Natural killer cell (primary cell): ENCODE measurements at regions of chr4 and their contacts with region 1.

Region 1: GRCh38 chr4:146175541-146176453 is at the start of gene LSM6:
- DNase-seq: peak; percentile 78 to 91
- ATAC-seq: peak; percentile 91 to 95 (median 93)
- H3K4me3 ChIP-seq: peak within 1 kb of the TSS; percentile 100
- H3K4me3 Mint-ChIP-seq: peak within 1 kb of the TSS; percentile 92
- H3K27ac ChIP-seq: peak within 1 kb of the TSS; percentile 84
- H3K27ac Mint-ChIP-seq: peak within 1 kb of the TSS; percentile 76 to 93
- H3K4me1 ChIP-seq: peaks cover 13% of the 10 kb centered on the region
- H3K4me1 Mint-ChIP-seq: peaks cover 48% of the 10 kb centered on the region in 2 donors
- H3K27me3 ChIP-seq: no peaks in the 10 kb centered on the region
- H3K27me3 Mint-ChIP-seq: peaks cover 0 to 3% of the 10 kb centered on the region in 2 donors
- CTCF ChIP-seq: no peak
- total RNA-seq, gene LSM6: 23.8 to 27.5 (median 23.8) TPM

Region 2: DNA sequence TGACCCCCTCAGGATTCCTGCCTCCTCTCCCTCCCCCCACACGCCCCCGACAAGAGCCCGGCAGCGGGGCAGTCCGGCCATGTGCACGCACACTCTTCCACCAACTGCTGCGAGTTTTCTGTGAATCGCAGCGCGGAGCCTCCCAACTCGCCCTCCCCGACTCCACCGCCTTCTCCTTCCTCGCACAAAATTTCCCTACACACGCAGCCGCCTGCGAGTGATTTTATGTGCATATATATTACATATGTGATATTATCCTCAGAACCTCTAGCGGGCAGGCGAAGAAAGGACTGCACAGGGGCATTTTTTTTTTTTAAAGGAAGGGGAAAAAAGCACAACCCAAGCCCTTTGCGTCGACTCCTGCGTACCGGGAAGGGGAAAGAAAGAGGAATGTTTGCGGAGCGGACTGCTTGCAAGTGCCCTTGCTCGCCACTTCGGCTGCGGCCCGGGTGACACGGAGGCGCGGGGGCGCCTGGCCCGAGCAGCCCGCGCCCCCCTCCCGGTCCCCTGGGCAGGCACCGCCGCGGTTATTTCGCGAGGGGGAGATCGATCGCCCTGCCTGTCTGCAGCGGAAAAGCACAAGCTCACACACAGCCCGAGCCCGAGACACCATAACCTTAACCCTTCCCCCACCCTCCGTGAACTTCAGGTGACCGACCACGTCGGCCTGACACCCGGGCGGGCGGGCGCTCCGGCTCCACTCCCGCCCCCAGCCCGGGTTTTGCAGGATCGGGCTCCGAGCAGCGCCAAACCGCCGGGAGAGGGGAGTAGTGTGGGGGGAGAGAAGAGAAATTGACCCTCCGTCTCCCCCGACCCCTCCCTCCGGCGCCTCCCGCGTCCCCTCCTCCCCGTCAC is 239.4 kb before region 1 on chr4:
- intact Hi-C with region 1: loop called (anchors 10 kb)
- DNase-seq: peak; percentile 60 to 85
- ATAC-seq: peak; percentile 53 to 78 (median 71)
- H3K4me3 ChIP-seq: peak overlapping the region; percentile 93
- H3K4me3 Mint-ChIP-seq: peak overlapping the region; percentile 88
- H3K27ac ChIP-seq: peak overlapping the region; percentile 74
- H3K27ac Mint-ChIP-seq: peak overlapping the region; percentile 86 to 94
- H3K4me1 ChIP-seq: peaks cover 16% of the 10 kb centered on the region
- H3K4me1 Mint-ChIP-seq: peaks cover 34 to 41% of the 10 kb centered on the region in 2 donors
- H3K27me3 ChIP-seq: no peaks in the 10 kb centered on the region
- H3K27me3 Mint-ChIP-seq: peaks cover 0 to 3% of the 10 kb centered on the region in 2 donors
- CTCF ChIP-seq: peak; percentile 36

Region 3: DNA sequence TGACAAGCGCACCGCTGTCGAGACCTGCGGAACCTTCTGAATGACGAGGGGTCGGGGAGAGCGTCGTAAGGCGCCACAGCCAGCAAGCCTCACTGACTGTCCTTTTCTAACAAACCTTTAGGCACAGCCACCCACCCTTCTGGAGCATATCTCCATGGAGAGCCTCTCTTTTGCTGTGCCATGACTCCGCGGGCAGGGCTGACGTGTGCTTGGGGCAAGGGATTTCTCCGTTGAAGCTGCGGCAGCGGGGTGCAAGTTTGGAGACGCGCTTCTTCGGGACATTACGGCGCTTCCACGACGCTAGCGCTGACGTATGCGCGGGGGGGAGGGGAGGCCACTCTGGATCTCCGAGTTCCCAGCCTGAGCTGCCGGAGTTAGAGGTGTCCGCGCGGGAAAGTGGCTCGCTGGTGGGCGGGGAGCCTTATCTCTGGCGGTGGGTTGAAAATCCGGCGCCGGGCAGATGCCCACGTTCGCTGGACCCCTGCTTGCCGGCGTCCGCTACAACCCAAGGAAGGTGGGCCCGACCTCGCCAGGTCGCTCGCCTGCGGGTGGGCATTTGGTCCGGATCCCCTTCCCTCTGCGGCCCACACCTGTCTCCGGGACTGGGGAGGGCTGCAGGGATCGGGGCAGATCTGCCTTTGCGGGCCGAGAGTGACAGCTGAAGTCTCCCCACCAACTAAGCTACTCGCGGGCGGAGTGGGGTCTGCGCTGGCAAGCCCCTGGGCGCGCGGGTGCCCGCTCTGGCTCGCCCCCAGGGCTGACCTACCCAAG is 346.5 kb after region 1 on chr4:
- intact Hi-C with region 1: loop called (anchors 5 kb)
- DNase-seq: peak; percentile 80 to 91
- ATAC-seq: peak; percentile 81 to 91 (median 89)
- H3K4me3 ChIP-seq: peak overlapping the region; percentile 94
- H3K4me3 Mint-ChIP-seq: no peak overlapping the region
- H3K27ac ChIP-seq: peak overlapping the region; percentile 78
- H3K27ac Mint-ChIP-seq: no peak overlapping the region
- H3K4me1 ChIP-seq: peaks cover 3% of the 10 kb centered on the region
- H3K4me1 Mint-ChIP-seq: peaks cover 8 to 18% of the 10 kb centered on the region in 2 donors
- H3K27me3 ChIP-seq: no peaks in the 10 kb centered on the region
- H3K27me3 Mint-ChIP-seq: no peaks in the 10 kb centered on the region
- CTCF ChIP-seq: no peak